ENCODE measurements at regions of chr18 and their contacts with region 1.

Region 1: DNA sequence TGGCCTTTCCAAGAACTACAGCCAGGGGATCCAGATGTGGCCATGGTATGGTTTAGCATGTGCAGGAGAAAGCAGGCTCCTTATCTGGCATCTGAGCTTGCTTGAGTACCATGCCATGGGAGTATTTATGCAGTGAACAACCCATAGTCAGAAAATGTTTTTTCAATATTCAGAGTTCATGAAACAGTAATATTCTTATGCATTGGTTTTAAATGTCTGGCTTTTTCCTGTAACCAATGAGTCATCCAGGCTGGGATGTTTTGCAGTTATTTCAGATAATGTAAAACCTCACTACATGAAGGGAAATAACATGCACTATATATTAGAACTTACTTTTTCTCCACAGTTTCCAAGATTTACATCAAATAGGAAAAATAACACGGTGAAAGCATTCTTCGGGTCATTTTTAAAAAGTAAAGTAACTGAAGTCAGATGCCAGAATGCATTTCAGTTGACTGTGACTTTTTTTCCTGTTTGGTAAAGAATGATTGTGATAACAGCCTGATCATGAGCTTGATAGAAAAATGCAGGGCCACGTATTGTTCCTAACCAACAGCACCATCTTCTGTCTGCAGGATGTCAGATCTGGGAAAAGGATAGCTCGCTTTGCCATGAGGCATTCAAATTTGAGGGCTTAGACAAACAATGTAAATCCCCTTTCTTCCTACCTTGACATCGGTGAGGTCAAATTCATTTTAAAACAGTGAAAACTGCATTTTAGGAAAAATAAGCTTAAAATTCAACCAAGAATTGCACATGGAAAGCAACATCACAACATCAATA is 152.8 kb downstream of the DSC3 start:
- DNase-seq: peak; percentile 60
- ATAC-seq: peak; percentile 77
- H3K4me3 ChIP-seq: no peak overlapping the region
- H3K27ac ChIP-seq: no peak overlapping the region
- H3K4me1 ChIP-seq: 0 out of 2 replicates have a peak, but pooled peaks cover 4% of the 10 kb centered on the region
- H3K27me3 ChIP-seq: peaks cover 6% of the 10 kb centered on the region; the same call in 1 of the 2 replicates
- CTCF ChIP-seq: peak; percentile 76

Region 2: GRCh38 chr18:29874519-29875098 is 1015.1 kb before region 1 on chr18:
- CTCF ChIA-PET with region 1: interaction called, 9 read pairs
- POLR2A ChIA-PET with region 1: no interaction called
- intact Hi-C with region 1: loop called (anchors 2 kb)
- DNase-seq: peak; percentile 63
- ATAC-seq: peak; percentile 64; the same call in 1 of the 2 replicates
- H3K4me3 ChIP-seq: no peak overlapping the region
- H3K27ac ChIP-seq: no peak overlapping the region
- H3K4me1 ChIP-seq: peaks cover 6% of the 10 kb centered on the region; the same call in 1 of the 2 replicates
- H3K27me3 ChIP-seq: no peaks in the 10 kb centered on the region
- CTCF ChIP-seq: peak; percentile 83

Region 3: DNA sequence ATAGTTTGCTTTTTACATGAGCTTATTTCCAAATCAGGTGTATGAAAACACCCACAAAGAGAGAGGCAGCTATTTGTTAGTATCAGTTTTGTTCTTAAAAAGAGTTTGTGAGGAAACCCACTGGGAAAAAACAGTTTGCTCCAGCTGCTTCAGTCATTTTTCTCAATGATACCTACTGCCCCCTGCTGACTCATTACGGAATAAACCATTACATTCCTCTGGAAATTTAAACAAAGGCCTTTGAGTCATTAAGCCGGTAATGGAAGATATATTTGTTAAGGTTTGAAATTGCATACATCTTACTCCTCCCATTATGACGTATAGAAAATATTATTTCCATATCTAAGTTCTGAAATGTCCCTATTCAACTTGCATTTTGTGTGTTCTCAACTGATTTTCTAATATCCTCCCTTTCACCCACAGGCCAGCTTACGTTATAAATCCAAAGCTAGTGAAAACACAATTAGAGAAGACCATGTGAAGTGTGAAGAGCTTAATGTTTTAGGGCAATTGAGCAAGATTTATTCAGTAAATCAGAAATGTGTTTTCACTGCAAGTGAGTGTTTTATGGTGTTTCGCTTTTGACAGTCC is 608.7 kb before region 1 on chr18:
- CTCF ChIA-PET with region 1: interaction called, 10 read pairs
- POLR2A ChIA-PET with region 1: no interaction called
- intact Hi-C with region 1: loop called (anchors 2 kb)
- DNase-seq: peak; percentile 89
- ATAC-seq: peak; percentile 29
- H3K4me3 ChIP-seq: no peak overlapping the region
- H3K27ac ChIP-seq: no peak overlapping the region
- H3K4me1 ChIP-seq: no peaks in the 10 kb centered on the region
- H3K27me3 ChIP-seq: no peaks in the 10 kb centered on the region
- CTCF ChIP-seq: peak; percentile 81

Region 4: GRCh38 chr18:30376515-30376914 is 513.2 kb before region 1 on chr18:
- CTCF ChIA-PET with region 1: interaction called, 5 read pairs
- POLR2A ChIA-PET with region 1: no interaction called
- intact Hi-C with region 1: loop called (anchors 5 kb)
- DNase-seq: peak; percentile 57
- ATAC-seq: no peak
- H3K4me3 ChIP-seq: no peak overlapping the region
- H3K27ac ChIP-seq: no peak overlapping the region
- H3K4me1 ChIP-seq: no peaks in the 10 kb centered on the region
- H3K27me3 ChIP-seq: no peaks in the 10 kb centered on the region
- CTCF ChIP-seq: peak; percentile 60

Region 5: DNA sequence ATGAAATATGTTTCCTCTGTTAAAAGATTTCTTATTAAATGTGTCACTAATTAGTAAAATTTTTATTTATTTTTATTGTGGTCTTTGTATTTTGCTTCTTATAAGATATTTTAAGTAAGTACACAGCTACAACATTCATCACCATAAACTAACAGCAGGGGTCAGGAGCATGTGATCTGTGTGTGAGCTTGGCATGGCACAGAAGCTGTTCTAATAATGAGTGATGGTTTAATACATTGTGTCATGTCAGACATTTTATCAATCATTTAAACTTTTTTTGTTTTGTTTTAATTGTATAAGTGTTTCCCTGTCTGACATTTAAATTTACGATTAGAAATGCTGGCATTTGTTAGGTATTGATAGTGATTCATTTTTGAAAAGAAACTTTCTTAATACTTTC is 432.6 kb before region 1 on chr18:
- CTCF ChIA-PET with region 1: interaction called, 14 read pairs
- POLR2A ChIA-PET with region 1: no interaction called
- intact Hi-C with region 1: loop called (anchors 1 kb)
- DNase-seq: peak; percentile 41
- ATAC-seq: peak; percentile 66
- H3K4me3 ChIP-seq: no peak overlapping the region
- H3K27ac ChIP-seq: no peak overlapping the region
- H3K4me1 ChIP-seq: no peaks in the 10 kb centered on the region
- H3K27me3 ChIP-seq: no peaks in the 10 kb centered on the region
- CTCF ChIP-seq: peak; percentile 46; the same call in 1 of the 2 replicates

Region 6: DNA sequence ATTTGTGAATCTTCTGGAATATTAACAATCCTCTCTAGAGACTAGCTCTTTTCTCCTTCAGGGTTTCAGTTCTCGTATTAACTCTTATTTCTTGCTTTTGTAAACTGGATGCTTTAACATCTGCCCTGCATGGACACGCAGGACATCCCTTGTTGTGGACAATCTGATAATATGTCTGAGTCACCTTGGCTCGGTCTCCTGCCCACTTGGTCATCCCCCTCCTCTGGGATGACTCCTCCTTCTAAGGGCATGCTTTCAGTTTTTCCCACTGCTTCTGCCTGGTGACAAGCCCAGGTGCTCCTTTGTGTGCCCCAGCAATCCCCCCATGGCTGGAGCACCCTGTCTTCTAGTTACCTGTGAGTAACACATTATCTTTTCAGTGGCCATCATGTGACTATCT is 307.6 kb before region 1 on chr18:
- CTCF ChIA-PET with region 1: no interaction called
- POLR2A ChIA-PET with region 1: no interaction called
- intact Hi-C with region 1: loop called (anchors 10 kb)
- DNase-seq: peak; percentile 57
- ATAC-seq: peak; percentile 70
- H3K4me3 ChIP-seq: no peak overlapping the region
- H3K27ac ChIP-seq: 0 out of 2 replicates have a peak overlapping the region, but pooled peaks have one; percentile 1
- H3K4me1 ChIP-seq: peaks cover 12% of the 10 kb centered on the region; the same call in 1 of the 2 replicates
- H3K27me3 ChIP-seq: no peaks in the 10 kb centered on the region
- CTCF ChIP-seq: no peak